ENCODE measurements at regions of chr22 and their contacts with region 1.

Region 1: DNA sequence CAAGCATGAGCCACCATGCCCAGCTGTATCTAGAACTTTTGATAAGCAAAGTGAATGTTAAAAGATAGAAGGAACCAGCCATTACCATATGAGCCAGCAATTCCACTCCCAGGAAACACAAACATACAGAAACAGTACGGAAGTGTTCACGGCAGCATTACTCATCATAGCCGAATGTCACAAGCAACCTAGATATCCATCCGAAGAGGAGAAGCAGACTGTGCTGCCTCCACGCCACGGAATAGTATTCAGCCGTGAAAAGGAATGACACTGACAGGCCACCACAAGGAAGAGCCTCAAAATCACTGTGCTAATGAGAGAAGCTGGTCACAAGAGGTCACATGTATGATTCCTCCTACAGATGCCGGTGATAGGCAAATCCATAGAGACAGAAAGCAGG is 17.6 kb upstream of the MGAT3 start:
- DNase-seq: no peak
- ATAC-seq: peak; percentile 81
- H3K4me3 ChIP-seq: no peak overlapping the region
- H3K4me3 Mint-ChIP-seq: peak overlapping the region in 2 of 10 donors; percentile 20 to 29
- H3K27ac ChIP-seq: no peak overlapping the region
- H3K27ac Mint-ChIP-seq: peak overlapping the region in 1 of 9 donors; percentile 4
- H3K4me1 ChIP-seq: peaks cover 0 to 11% of the 10 kb centered on the region in 2 donors
- H3K4me1 Mint-ChIP-seq: peaks cover 3 to 19% (median 7%) of the 10 kb centered on the region in 7 donors
- H3K27me3 ChIP-seq: peaks cover 0 to 4% of the 10 kb centered on the region in 2 donors
- H3K27me3 Mint-ChIP-seq: peaks cover 0 to 10% (median 7%) of the 10 kb centered on the region in 5 donors

Region 2: GRCh38 chr22:39395936-39396796 is 43.0 kb before region 1 on chr22:
- CTCF ChIA-PET with region 1: interaction called, 7 read pairs
- POLR2A ChIA-PET with region 1: interaction called, 5 read pairs
- intact Hi-C with region 1: loop called in 1 of 2 experiments (anchors 1 kb)
- DNase-seq: no peak
- ATAC-seq: no peak
- H3K4me3 ChIP-seq: no peak overlapping the region
- H3K4me3 Mint-ChIP-seq: peak overlapping the region in 1 of 10 donors; percentile 34
- H3K27ac ChIP-seq: no peak overlapping the region
- H3K27ac Mint-ChIP-seq: peak overlapping the region in 2 of 9 donors; percentile 5 to 6
- H3K4me1 ChIP-seq: peaks cover 6 to 9% of the 10 kb centered on the region in 2 donors
- H3K4me1 Mint-ChIP-seq: peaks cover 5 to 19% (median 11%) of the 10 kb centered on the region in 7 donors
- H3K27me3 ChIP-seq: no peaks in the 10 kb centered on the region
- H3K27me3 Mint-ChIP-seq: peaks cover 0 to 2% (median 0%) of the 10 kb centered on the region in 5 donors

Region 3: GRCh38 chr22:39471381-39472141 is 32.4 kb after region 1 on chr22:
- CTCF ChIA-PET with region 1: no interaction called
- POLR2A ChIA-PET with region 1: no interaction called
- intact Hi-C with region 1: loop called in 1 of 2 experiments (anchors 5 kb)
- DNase-seq: peak in 1 of 9 donors; percentile 11
- ATAC-seq: peak; percentile 55
- H3K4me3 ChIP-seq: no peak overlapping the region
- H3K4me3 Mint-ChIP-seq: peak overlapping the region in 6 of 10 donors; percentile 17 to 76 (median 50)
- H3K27ac ChIP-seq: no peak overlapping the region
- H3K27ac Mint-ChIP-seq: peak overlapping the region in 6 of 9 donors; percentile 8 to 82 (median 48)
- H3K4me1 ChIP-seq: peaks cover 9 to 15% of the 10 kb centered on the region in 2 donors
- H3K4me1 Mint-ChIP-seq: peaks cover 8 to 36% (median 19%) of the 10 kb centered on the region in 7 donors
- H3K27me3 ChIP-seq: no peaks in the 10 kb centered on the region
- H3K27me3 Mint-ChIP-seq: peaks cover 0 to 2% (median 0%) of the 10 kb centered on the region in 5 donors

Region 4: GRCh38 chr22:39580006-39580441 is 140.9 kb after region 1 on chr22:
- CTCF ChIA-PET with region 1: no interaction called
- POLR2A ChIA-PET with region 1: no interaction called
- intact Hi-C with region 1: no loop called
- DNase-seq: no peak
- ATAC-seq: no peak
- H3K4me3 ChIP-seq: no peak overlapping the region
- H3K4me3 Mint-ChIP-seq: no peak overlapping the region
- H3K27ac ChIP-seq: no peak overlapping the region
- H3K27ac Mint-ChIP-seq: no peak overlapping the region
- H3K4me1 ChIP-seq: no peaks in the 10 kb centered on the region
- H3K4me1 Mint-ChIP-seq: peaks cover 0 to 7% (median 0%) of the 10 kb centered on the region in 7 donors
- H3K27me3 ChIP-seq: no peaks in the 10 kb centered on the region
- H3K27me3 Mint-ChIP-seq: peaks cover 0 to 25% (median 12%) of the 10 kb centered on the region in 5 donors

Measured in naive thymus-derived CD4-positive, alpha-beta T cell (primary cell).